SK-N-SH (cell line): ENCODE measurements at regions of chr10 and their contacts with region 1.

Region 1: GRCh38 chr10:102450194-102450938 is 977 bp downstream of the C10orf95 start:
- DNase-seq: peak; percentile 95
- H3K4me3 ChIP-seq: peak overlapping the region; percentile 62 to 71
- H3K27ac ChIP-seq: peak overlapping the region in 1 of 2 experiments; percentile 66; a peak in 2 of 4 replicates
- H3K4me1 ChIP-seq: peaks cover 0 to 10% of the 10 kb centered on the region in 2 experiments; a peak in 2 of 4 replicates
- H3K27me3 ChIP-seq: no peaks in the 10 kb centered on the region
- CTCF ChIP-seq: no peak
- EP300 ChIP-seq: no peak
- RAD21 ChIP-seq: no peak

Region 2: GRCh38 chr10:102432162-102432950 is 18.0 kb before region 1 on chr10 and contains the start of gene CUEDC2:
- CTCF ChIA-PET with region 1: interaction called, 6 read pairs
- POLR2A ChIA-PET with region 1: interaction called, 19 read pairs
- DNase-seq: peak; percentile 94
- H3K4me3 ChIP-seq: peak within 1 kb of the TSS; percentile 82 to 93
- H3K27ac ChIP-seq: peak within 1 kb of the TSS; percentile 55 to 80; a peak in 3 of 4 replicates
- H3K4me1 ChIP-seq: peaks cover 0 to 6% of the 10 kb centered on the region in 2 experiments; a peak in 1 of 4 replicates
- H3K27me3 ChIP-seq: no peaks in the 10 kb centered on the region
- CTCF ChIP-seq: no peak
- EP300 ChIP-seq: peak in 1 of 2 experiments; percentile 8; a peak in 1 of 4 replicates
- RAD21 ChIP-seq: no peak
- polyA plus RNA-seq, gene CUEDC2: 130 and 162 TPM in 2 replicates

Region 3: GRCh38 chr10:102461187-102462054 is 11.1 kb after region 1 on chr10:
- CTCF ChIA-PET with region 1: interaction called, 10 read pairs
- POLR2A ChIA-PET with region 1: interaction called, 27 read pairs
- DNase-seq: peak; percentile 99
- H3K4me3 ChIP-seq: peak overlapping the region; percentile 55 to 74
- H3K27ac ChIP-seq: peak overlapping the region in 1 of 2 experiments; percentile 58; a peak in 1 of 4 replicates
- H3K4me1 ChIP-seq: peaks cover 0 to 10% of the 10 kb centered on the region in 2 experiments; a peak in 1 of 4 replicates
- H3K27me3 ChIP-seq: no peaks in the 10 kb centered on the region
- CTCF ChIP-seq: no peak
- EP300 ChIP-seq: no peak
- RAD21 ChIP-seq: no peak